H1 (cell line): ENCODE measurements at regions of chr11 and their contacts with region 1.

Region 1: DNA sequence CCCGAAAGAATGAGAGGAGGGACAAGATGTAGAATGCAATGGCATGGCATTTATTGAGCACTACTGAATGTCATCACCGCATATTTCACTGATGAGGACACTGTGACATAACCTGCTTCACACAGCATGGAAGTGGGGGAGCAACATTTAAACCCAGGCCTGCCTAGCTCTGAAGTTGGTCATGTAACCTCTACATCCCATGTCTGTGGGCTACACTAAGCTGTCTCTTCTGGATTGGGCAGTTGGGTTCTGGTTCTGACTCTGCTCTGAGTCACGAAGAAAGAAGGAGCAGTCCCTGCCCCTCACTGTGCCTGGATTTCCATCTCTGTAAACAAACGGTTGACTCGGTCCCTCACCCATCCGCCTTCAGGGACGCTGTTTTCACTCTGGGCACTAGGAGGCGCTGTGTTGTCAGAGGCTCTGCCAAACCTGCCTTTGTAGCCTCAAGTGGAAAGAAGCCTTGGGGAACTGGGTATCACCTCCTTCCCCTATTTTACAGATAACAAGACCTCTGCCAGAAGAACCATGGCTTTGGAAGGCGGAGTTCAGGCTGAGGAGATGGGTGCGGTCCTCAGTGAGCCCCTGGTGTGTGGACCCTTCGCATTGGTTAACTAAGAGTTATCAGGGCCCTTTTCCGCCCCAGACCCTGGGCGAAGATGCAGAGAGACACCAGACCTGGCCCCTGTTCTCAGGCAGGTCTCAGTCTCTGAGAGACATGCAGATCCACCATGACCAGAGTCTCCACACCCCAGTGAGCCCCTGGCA is 12.7 kb upstream of the ARHGEF17 start:
- DNase-seq: peak in 1 of 2 experiments; percentile 95
- H3K4me3 ChIP-seq: no peak overlapping the region
- H3K27ac ChIP-seq: no peak overlapping the region
- H3K4me1 ChIP-seq: peaks cover 0 to 4% (median 2%) of the 10 kb centered on the region in 4 experiments; a peak in 3 of 7 replicates
- H3K27me3 ChIP-seq: peaks cover 0 to 19% (median 8%) of the 10 kb centered on the region in 4 experiments; a peak in 5 of 7 replicates
- CTCF ChIP-seq: peak; percentile 93 to 100 (median 96)
- EP300 ChIP-seq: no peak
- POLR2A ChIP-seq: no peak
- RAD21 ChIP-seq: peak; percentile 68 to 76

Region 2: GRCh38 chr11:73114110-73114824 is 181.1 kb before region 1 on chr11:
- CTCF ChIA-PET with region 1: no interaction called
- POLR2A ChIA-PET with region 1: no interaction called
- DNase-seq: no peak
- H3K4me3 ChIP-seq: no peak overlapping the region
- H3K27ac ChIP-seq: no peak overlapping the region
- H3K4me1 ChIP-seq: no peaks in the 10 kb centered on the region
- H3K27me3 ChIP-seq: no peaks in the 10 kb centered on the region
- CTCF ChIP-seq: no peak
- EP300 ChIP-seq: no peak
- POLR2A ChIP-seq: no peak
- RAD21 ChIP-seq: no peak

Region 3: GRCh38 chr11:73236854-73237253 is 58.6 kb before region 1 on chr11:
- CTCF ChIA-PET with region 1: interaction called, 233 read pairs
- POLR2A ChIA-PET with region 1: no interaction called
- DNase-seq: peak in 1 of 2 experiments; percentile 87
- H3K4me3 ChIP-seq: no peak overlapping the region
- H3K27ac ChIP-seq: no peak overlapping the region
- H3K4me1 ChIP-seq: peaks cover 0 to 4% (median 3%) of the 10 kb centered on the region in 4 experiments; a peak in 3 of 7 replicates
- H3K27me3 ChIP-seq: no peaks in the 10 kb centered on the region
- CTCF ChIP-seq: peak; percentile 90 to 93 (median 91)
- EP300 ChIP-seq: no peak
- POLR2A ChIP-seq: no peak
- RAD21 ChIP-seq: peak; percentile 89 to 91

Region 4: GRCh38 chr11:73280651-73281071 is 14.8 kb before region 1 on chr11:
- CTCF ChIA-PET with region 1: interaction called, 173 read pairs
- POLR2A ChIA-PET with region 1: no interaction called
- DNase-seq: no peak
- H3K4me3 ChIP-seq: no peak overlapping the region
- H3K27ac ChIP-seq: no peak overlapping the region
- H3K4me1 ChIP-seq: no peaks in the 10 kb centered on the region; a peak in 2 of 7 replicates
- H3K27me3 ChIP-seq: no peaks in the 10 kb centered on the region
- CTCF ChIP-seq: no peak
- EP300 ChIP-seq: no peak
- POLR2A ChIP-seq: no peak
- RAD21 ChIP-seq: no peak

Region 5: DNA sequence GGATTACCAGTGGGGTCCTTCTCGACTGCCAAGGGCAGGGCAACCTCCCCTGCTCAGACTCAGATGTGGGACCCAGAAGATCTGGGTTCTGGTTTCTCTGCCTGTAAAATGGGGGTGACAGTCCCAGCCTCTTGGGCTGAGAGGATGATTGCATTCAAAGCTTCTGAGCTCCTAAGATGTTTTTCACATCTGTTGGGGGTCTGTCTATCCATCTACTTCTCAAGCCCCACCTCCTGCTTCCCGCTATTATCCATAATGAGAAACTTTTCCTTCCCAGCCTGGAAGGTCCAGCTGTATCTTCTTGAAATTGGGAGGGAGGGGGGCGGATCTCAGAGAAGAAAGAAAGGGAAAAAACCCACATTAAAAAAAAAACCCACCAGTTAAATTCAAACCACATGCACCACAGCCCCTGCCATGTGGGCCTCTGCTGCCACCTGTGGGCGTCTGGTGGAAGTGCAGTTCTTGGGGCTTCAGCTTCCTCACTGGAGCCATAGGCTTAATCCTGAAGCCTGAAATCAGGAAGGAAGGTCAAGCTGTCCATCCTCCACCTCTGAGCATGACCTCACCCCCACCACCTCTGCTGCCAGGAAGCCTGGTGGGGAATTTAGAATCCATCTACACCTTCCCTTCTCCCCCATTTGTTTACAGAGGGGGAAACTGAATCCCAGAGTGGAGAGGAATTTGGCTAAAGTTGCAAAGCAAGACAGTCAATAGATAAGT is 40.0 kb after region 1 on chr11:
- CTCF ChIA-PET with region 1: interaction called, 119 read pairs
- POLR2A ChIA-PET with region 1: no interaction called
- DNase-seq: peak in 1 of 2 experiments; percentile 98
- H3K4me3 ChIP-seq: no peak overlapping the region
- H3K27ac ChIP-seq: no peak overlapping the region
- H3K4me1 ChIP-seq: peaks cover 10 to 32% (median 26%) of the 10 kb centered on the region in 4 experiments
- H3K27me3 ChIP-seq: peaks cover 28 to 64% (median 52%) of the 10 kb centered on the region in 4 experiments
- CTCF ChIP-seq: peak; percentile 93 to 95 (median 94)
- EP300 ChIP-seq: no peak
- POLR2A ChIP-seq: no peak
- RAD21 ChIP-seq: peak; percentile 93 to 95

Region 6: GRCh38 chr11:73350908-73351636 is 55.7 kb after region 1 on chr11:
- CTCF ChIA-PET with region 1: interaction called, 60 read pairs
- POLR2A ChIA-PET with region 1: no interaction called
- DNase-seq: peak in 1 of 2 experiments; percentile 63
- H3K4me3 ChIP-seq: no peak overlapping the region
- H3K27ac ChIP-seq: no peak overlapping the region
- H3K4me1 ChIP-seq: no peaks in the 10 kb centered on the region; a peak in 2 of 7 replicates
- H3K27me3 ChIP-seq: no peaks in the 10 kb centered on the region
- CTCF ChIP-seq: peak; percentile 82 to 88 (median 85)
- EP300 ChIP-seq: no peak
- POLR2A ChIP-seq: no peak
- RAD21 ChIP-seq: peak; percentile 65 to 74

Region 7: GRCh38 chr11:73393479-73394380 is 98.3 kb after region 1 on chr11:
- CTCF ChIA-PET with region 1: interaction called, 14 read pairs
- POLR2A ChIA-PET with region 1: no interaction called
- DNase-seq: peak; percentile 61 to 89
- H3K4me3 ChIP-seq: no peak overlapping the region
- H3K27ac ChIP-seq: no peak overlapping the region
- H3K4me1 ChIP-seq: no peaks in the 10 kb centered on the region; a peak in 1 of 7 replicates
- H3K27me3 ChIP-seq: no peaks in the 10 kb centered on the region
- CTCF ChIP-seq: peak; percentile 89 to 99 (median 96)
- EP300 ChIP-seq: no peak
- POLR2A ChIP-seq: no peak
- RAD21 ChIP-seq: peak; percentile 95 to 97